Activated CD4-positive, alpha-beta T cell treated with anti-CD3 and anti-CD28 coated beads, Interleukin-2, amount 10 ng/mL, durations not matched to agents 24 days and 14 days (primary cell): ENCODE measurements at regions of chr12 and their contacts with region 1.

Region 1: GRCh38 chr12:54359033-54359761 is 5.1 kb downstream of the GPR84 start:
- DNase-seq: peak; percentile 98
- H3K4me3 Mint-ChIP-seq: no peak overlapping the region
- H3K27ac Mint-ChIP-seq: no peak overlapping the region
- H3K4me1 Mint-ChIP-seq: peaks cover 28% of the 10 kb centered on the region
- H3K27me3 Mint-ChIP-seq: no peaks in the 10 kb centered on the region

Region 2: DNA sequence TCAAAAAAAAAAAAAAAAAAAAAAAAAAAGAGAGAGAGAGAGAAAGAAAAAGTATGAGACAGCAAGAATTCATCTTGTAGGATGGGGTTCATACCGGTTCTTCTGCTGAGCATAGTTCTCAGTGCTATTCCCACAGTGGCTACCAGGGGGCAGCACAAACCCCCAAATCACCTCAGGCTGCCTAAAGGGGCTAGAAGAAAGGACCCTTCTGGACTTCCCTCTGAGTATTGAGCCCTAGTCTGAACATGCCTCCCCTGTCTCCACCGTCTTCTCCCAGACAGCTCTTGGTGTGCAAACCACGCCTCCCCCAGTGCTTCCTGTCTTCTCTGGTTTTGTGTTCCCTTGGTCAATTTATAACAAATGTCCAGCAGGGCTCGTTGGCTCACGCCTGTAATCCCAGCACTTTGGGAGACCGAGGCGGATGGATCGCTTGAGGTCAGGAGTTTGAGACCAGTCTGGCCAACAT is 139.1 kb before region 1 on chr12:
- intact Hi-C with region 1: loop called (anchors 1 kb)
- DNase-seq: peak; percentile 90
- H3K4me3 Mint-ChIP-seq: peak overlapping the region; percentile 12
- H3K27ac Mint-ChIP-seq: no peak overlapping the region
- H3K4me1 Mint-ChIP-seq: peaks cover 21% of the 10 kb centered on the region
- H3K27me3 Mint-ChIP-seq: peaks cover 11% of the 10 kb centered on the region

Region 3: DNA sequence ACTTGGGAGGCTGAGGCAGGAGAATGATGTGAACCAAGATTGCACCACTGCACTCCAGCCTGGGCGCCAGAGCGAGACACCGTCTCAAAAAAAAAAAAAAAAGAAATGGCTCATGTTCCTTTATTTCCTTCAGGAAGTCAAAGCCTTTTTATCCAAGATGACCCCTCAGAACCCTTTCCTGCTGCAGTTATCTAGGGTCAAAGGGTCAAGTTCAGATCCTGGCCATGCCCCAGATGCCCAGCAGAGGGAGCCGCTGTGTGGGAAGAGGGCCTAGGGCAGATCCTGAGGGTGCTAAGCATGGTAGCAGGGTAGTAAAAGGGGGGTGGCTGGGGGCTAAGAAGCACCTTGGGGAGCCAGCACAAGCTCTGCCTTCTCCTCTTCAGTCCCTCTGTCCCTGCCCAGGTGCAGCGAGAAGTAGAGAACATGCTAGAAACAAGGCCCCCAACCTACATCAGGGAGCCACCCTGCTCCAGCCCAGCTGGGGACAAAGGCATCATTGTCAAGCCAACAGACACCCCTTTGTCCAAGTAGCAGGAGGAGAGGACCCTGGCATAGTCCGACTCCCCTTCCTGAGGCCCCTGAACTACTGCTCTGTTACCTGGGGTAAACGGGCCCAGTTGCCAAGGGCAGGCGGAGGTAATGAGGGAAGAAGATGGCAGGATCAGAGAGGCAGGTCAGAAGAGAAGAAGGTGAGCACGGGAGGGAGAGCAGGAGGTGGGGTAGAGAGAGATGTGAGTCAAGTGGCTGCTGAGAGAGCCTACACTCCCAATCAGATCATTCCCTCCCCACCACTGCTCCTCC is 64.8 kb before region 1 on chr12:
- intact Hi-C with region 1: loop called (anchors 1 kb)
- DNase-seq: peak; percentile 91
- H3K4me3 Mint-ChIP-seq: no peak overlapping the region
- H3K27ac Mint-ChIP-seq: no peak overlapping the region
- H3K4me1 Mint-ChIP-seq: peaks cover 4% of the 10 kb centered on the region
- H3K27me3 Mint-ChIP-seq: peaks cover 21% of the 10 kb centered on the region

Region 4: DNA sequence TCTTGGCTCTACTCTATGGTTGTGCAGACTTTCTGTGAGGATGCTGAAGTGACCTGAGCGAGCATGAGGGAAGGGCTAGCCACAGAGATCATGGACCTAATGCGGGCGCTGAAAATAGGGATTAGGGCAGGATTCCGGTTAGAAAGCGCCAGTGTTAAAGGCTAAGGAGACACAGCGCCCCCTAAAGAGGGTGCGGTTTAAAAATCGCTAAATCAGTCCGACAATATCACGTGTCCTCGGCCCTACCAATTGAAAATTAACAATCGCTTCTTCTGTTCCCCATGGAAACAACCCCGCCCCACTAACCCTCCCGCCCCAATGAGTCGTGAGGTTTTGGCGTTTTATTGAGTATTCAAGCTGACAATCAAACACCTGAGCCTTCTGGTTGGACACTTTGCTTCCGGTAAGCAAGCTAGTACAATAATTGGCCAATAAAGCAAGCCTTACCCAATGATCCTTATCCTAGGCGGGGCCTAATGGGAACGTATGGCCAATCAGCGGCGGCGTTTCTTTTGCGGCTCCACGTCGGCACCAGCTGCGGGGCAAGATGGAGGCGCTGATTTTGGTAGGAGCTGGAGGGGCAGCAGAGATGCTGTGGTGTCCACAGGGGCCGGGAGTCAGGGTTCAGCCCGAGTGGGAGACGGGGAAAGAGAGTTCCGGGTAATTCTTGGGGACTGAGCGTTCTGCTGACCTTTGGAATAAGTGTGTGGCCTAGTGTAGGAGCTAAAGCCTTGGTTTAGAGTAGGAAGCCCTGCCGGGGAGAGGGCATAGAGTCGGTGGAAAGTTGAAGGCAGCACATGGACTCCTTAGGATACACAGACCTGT is 34.4 kb before region 1 on chr12 and contains the start of gene COPZ1:
- intact Hi-C with region 1: loop called (anchors 1 kb)
- DNase-seq: peak; percentile 97
- H3K4me3 Mint-ChIP-seq: peak within 1 kb of the TSS; percentile 98
- H3K27ac Mint-ChIP-seq: peak within 1 kb of the TSS; percentile 93
- H3K4me1 Mint-ChIP-seq: peaks cover 23% of the 10 kb centered on the region
- H3K27me3 Mint-ChIP-seq: no peaks in the 10 kb centered on the region
- total RNA-seq, gene COPZ1: 116 and 121 TPM in 2 replicates

Region 5: DNA sequence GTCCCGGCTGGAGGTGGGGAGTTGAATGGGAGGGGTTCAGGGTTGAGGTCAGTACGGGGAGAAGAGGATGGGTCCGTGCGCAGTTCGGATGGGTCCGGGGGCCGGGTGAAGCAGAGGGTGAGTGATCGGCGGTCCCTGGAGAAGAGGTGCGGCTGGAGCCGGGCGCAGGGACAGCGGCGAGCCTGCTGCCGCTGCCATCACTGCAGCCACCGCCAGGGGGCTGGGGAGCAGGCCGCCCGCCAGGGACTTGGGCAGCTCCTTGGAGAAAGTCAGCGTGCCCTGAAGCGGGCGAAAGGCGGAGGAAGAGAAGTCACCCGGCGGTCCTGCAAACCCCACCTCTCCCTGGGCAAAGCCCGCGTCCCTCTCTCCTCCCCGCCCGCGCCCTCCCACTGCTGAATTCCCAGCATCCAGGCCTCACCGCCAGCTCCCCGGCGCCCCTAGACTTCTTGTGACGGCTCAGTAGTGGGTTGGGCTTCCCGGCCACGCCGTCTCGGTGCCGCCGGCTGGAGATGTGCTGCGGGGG is 11.1 kb after region 1 on chr12:
- intact Hi-C with region 1: no loop called
- DNase-seq: peak; percentile 78
- H3K4me3 Mint-ChIP-seq: peak overlapping the region; percentile 40
- H3K27ac Mint-ChIP-seq: no peak overlapping the region
- H3K4me1 Mint-ChIP-seq: peaks cover 34% of the 10 kb centered on the region
- H3K27me3 Mint-ChIP-seq: peaks cover 8% of the 10 kb centered on the region